Testis (tissue), 5 donors: ENCODE measurements at regions of chr10 and their contacts with region 1.

Region 1: GRCh38 chr10:29304264-29305030 is 15.6 kb downstream of the LYZL1 start:
- DNase-seq: peak; percentile 83
- H3K4me3 ChIP-seq: no peak overlapping the region
- H3K27ac ChIP-seq: peak overlapping the region; percentile 22 to 72
- H3K4me1 ChIP-seq: peaks cover 7% of the 10 kb centered on the region
- H3K27me3 ChIP-seq: no peaks in the 10 kb centered on the region
- CTCF ChIP-seq: peak; percentile 61 to 85 (median 61)
- POLR2A ChIP-seq: no peak

Region 2: DNA sequence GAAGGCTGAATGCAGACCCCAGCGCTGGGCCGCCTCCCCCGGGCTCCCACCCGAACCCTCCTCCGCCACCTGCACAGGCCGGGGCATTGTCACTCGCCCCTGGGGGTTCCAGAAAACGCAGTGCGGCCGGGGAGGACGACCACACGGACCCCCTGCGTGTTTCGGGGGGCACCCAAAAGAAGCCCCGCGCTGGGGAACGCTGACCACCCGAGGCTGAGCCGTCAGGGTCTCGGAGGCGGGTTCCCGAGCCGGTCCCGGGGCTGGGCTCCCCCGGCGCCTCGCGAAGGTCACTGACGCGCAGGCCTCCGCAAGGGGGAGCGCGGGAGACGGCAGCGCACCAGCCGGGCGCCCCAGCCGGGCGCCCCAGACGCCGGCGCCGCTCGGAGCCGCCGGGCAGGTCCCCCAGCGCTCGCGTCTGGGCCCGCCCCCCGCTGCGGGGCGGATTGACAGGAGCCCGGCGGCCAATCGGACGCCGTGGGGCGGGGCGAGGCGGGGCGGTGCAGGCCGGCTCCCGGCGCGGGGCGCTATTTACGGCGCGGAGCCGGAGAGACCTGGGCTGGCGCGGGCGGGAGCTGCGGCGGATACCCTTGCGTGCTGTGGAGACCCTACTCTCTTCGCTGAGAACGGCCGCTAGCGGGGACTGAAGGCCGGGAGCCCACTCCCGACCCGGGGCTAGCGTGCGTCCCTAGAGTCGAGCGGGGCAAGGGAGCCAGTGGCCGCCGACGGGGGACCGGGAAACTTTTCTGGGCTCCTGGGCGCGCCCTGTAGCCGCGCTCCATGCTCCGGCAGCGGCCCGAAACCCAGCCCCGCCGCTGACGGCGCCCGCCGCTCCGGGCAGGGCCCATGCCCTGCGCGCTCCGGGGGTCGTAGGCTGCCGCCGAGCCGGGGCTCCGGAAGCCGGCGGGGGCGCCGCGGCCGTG is 627.2 kb before region 1 on chr10 and contains the start of gene BAMBI:
- intact Hi-C with region 1: loop called (anchors 5 kb)
- DNase-seq: peak; percentile 95
- H3K4me3 ChIP-seq: peak within 1 kb of the TSS; percentile 74 to 80
- H3K27ac ChIP-seq: peak within 1 kb of the TSS; percentile 53 to 57
- H3K4me1 ChIP-seq: peaks cover 4% of the 10 kb centered on the region
- H3K27me3 ChIP-seq: no peaks in the 10 kb centered on the region
- CTCF ChIP-seq: peak; percentile 53 to 73 (median 57)
- POLR2A ChIP-seq: peak; percentile 36
- total RNA-seq, gene BAMBI: 49.7 to 59.6 TPM

Region 3: GRCh38 chr10:29998142-29998808 is 693.8 kb after region 1 on chr10:
- intact Hi-C with region 1: no loop called
- DNase-seq: peak; percentile 90
- H3K4me3 ChIP-seq: no peak overlapping the region
- H3K27ac ChIP-seq: no peak overlapping the region
- H3K4me1 ChIP-seq: peaks cover 23% of the 10 kb centered on the region
- H3K27me3 ChIP-seq: no peaks in the 10 kb centered on the region
- CTCF ChIP-seq: peak; percentile 90 to 98 (median 97)
- POLR2A ChIP-seq: no peak